Cardiac septum (tissue), 1 donor: ENCODE measurements at regions of chr19 and their contacts with region 1.

Region 1: DNA sequence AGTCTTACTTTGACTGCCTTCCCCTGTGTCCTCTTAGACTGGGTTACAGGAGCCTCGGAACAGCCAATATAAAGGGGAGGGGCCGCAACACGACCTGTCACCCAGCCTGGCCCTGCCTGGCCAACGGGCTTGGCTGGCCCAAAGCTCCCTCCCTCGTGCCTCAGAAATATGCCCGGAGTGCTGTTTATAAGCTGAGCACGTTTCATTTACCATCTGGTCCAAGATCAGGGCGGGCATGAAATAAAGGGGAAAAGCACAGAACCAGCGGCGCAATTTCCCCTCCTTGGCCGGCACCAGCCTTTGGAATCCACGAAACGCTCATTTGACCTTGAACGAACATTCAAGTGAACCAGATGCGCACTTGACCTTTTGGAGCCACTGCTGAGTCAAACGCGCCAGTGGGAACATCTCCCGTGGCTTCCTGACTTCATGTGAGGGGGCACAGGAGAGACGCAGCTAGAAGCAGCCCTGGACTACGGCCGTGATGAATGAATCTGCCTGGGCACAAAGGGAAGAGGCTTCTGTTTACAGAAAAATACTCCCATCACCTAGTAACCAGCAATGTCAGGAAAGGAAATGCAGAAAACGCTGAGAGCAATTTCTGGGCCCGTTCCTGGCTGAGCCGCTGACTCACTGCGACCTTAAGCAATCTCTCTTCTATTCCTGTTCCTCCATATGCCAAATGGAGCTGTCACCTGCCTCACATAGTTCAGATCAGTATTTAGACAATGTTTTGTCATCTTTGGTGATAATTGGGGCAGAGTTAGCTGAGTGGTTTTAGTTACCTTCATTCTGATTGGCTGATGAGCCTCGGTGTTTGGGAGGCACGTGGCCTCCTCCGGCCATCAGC is 53.3 kb downstream of the RFX2 start:
- DNase-seq: peak; percentile 87

Region 2: GRCh38 chr19:5782945-5783934 is 273.8 kb before region 1 on chr19:
- intact Hi-C with region 1: no loop called
- DNase-seq: no peak

Region 3: DNA sequence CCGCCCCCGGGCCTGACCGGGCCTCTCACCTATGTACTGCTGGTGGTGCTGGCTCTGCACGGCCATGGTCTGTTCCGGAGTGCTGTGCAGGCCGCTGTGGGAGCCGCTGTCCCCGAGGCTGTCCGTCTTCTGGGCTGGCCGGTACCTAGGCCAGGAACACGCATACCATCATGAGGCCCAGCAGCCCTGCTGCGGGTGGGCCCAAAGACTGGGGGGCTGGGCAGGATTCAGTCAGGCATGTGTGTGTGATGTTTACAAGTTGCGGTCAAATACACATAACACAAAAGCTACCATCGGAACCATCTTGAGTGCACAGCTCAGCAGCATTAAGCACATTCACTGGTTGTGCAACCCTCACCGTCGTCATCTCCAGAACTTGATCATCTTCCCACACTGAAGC is 46.9 kb before region 1 on chr19:
- intact Hi-C with region 1: no loop called
- DNase-seq: no peak

Region 4: DNA sequence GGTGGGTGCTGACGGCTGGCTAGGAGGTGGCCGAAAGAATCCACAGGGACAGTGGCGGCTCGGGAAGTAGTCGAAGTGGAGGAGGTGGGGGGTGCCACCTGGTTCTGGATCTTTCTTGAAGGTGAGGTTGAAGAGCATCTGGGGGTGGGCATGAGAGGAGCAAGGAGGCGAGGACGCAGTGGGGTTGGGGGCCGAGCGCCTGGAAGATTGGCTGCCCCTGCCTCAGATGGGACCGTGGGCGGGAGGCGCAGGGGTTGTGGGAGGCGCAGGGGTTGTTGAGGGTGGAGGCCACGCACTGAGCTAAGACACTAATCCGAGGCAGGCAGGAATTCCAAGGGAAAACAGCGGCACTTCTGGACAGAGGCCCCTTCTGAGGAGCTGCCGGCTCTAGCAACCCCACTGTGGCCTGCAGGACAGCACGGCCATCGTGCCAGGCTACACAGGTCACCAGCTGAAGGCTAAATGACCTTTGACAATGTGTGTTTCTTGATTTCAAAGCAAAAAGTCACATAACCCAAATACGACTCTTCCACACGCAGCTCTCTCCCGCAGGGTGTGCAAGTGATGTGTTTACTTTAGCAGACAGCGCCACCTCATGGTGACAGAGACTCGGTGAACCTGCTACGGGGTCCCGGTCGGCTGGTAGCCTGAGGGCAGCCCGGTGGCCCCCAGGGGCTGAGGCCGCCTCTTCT is 35.0 kb before region 1 on chr19:
- intact Hi-C with region 1: no loop called
- DNase-seq: peak; percentile 83

Region 5: GRCh38 chr19:6103217-6103644 is 46.2 kb after region 1 on chr19:
- intact Hi-C with region 1: loop called (anchors 5 kb)
- DNase-seq: peak; percentile 81

Region 6: GRCh38 chr19:6110360-6110977 is 53.4 kb after region 1 on chr19 and contains the start of gene RFX2:
- intact Hi-C with region 1: loop called (anchors 2 kb)
- DNase-seq: peak; percentile 100
- total RNA-seq, gene RFX2: 4.0 TPM